Sigmoid colon (tissue), 7 donors: ENCODE measurements at regions of chr18 and their contacts with region 1.

Region 1: DNA sequence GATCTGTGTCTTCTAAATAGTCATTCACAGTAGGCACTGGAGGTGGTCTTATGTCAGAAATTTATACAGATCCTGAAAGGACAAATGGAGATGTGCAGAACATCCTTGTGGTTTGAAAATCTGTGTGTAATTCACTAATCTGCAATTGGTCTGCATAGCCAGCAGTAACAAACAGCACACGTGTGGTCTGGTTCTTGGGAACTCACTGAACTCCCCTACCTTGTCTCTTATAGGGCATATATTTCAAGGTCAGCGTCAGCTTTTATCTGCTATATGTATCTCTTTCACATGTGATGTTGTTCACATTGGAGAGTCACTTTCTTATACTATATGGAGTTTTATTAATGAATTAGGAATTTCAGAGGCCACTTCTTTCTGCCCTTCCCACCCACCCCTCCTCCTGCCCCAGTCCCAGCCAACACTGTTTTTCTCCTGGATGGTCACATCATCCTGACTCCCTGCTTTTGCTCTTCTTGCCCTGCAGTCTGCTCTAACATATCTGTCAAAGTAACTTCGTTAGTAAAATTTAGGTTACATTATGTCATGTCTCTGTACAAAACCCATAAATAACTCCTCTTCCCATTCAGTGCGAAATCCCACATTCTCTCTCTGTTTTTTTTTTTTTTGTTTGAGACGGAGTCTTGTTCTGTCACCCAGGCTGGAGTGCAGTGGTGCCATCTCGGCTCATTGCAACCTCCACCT is 35.4 kb upstream of the CABYR start:
- DNase-seq: no peak
- H3K4me3 ChIP-seq: no peak overlapping the region
- H3K27ac ChIP-seq: no peak overlapping the region
- H3K4me1 ChIP-seq: no peaks in the 10 kb centered on the region
- H3K27me3 ChIP-seq: no peaks in the 10 kb centered on the region
- CTCF ChIP-seq: no peak
- EP300 ChIP-seq: no peak
- POLR2A ChIP-seq: no peak

Region 2: DNA sequence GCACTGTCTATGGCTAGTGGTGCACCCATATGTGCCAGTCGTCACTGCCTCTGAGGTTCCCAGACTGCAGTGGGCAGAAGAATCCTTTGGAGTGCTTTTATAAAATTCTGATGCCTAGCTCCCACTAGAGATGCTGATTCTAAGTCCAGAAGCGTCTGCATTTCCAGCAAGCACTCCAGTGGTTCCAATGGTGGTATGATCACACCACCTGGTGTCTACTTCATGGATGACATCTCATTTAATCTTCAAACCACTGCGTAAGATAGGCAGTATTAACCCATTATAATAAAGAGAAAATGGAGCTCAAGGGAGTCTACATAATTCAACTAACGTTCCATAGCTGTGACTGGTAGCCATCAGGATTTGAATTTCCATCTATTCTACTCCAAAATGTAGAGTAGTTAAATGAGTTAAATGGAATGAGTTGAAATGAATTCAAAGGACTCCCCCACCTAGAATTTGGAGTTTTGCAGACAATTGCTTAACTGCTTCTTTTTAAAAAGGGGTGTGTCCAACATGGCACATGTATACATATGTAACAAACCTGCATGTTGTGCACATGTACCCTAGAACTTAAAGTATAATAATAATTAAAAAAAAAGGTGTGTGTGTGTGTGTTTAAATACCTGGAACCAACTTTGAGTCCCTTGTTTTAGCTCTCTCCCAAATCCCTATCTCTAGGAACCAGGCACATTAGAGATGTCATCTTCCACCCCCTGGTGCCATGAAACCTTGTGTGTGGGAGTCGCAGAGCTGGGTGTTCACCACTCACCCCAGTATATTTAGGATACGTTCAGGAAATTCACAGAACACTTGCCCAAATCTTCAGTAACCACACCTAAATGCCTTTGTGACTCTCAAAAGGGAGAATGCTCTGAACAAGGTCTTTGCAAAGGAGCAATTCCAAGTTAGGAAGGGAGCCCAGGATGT is 400.1 kb before region 1 on chr18:
- intact Hi-C with region 1: no loop called
- DNase-seq: no peak
- H3K4me3 ChIP-seq: no peak overlapping the region
- H3K27ac ChIP-seq: no peak overlapping the region
- H3K4me1 ChIP-seq: no peaks in the 10 kb centered on the region
- H3K27me3 ChIP-seq: no peaks in the 10 kb centered on the region
- CTCF ChIP-seq: peak in 2 of 4 experiments; percentile 17 to 28
- EP300 ChIP-seq: no peak
- POLR2A ChIP-seq: no peak

Region 3: DNA sequence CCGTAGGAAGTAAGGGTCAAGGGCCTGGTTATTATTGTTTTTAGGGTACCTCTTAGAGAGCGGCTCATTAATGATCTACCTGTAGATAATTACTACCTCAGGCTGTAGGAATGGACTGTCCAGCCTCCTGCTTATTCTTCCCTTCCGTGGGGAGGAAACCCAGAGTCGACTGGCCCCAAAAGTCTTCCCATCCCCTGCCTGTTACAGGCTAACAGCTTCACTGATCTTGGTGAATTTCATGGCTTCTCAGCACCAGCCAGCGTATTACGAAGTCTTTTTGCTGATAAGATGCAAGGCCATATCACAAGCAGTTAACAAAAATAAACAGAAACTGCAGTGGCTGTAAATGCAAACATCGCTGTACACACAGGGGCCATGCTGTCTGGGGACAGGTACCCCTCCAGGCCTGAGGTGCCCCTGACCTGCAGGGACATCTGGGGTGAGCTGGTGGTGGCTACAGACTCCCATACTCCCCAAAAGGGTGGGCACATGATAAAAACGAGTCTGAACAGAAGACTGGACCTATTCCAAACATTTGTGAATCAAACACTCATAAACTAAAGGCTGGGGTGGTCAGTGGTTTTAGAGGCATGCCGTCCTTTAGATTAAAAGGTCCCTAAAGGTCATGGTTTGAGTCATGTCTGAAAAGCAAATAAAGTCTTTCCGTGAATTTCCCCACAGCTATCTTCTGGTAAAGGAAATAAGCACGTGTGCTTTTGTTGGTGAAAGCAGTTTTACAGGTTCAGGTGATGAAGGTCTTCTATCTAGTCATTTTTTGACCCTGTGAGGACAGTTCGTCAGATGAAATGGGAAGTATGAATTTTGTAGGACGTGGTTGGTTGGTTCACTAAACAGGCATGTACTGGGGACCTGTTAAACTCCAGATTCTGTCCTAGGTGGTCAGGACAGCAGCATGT is 52.2 kb before region 1 on chr18:
- intact Hi-C with region 1: loop called (anchors 10 kb)
- DNase-seq: no peak
- H3K4me3 ChIP-seq: no peak overlapping the region
- H3K27ac ChIP-seq: no peak overlapping the region
- H3K4me1 ChIP-seq: peaks cover 0 to 6% (median 3%) of the 10 kb centered on the region in 4 donors
- H3K27me3 ChIP-seq: no peaks in the 10 kb centered on the region
- CTCF ChIP-seq: no peak
- EP300 ChIP-seq: no peak
- POLR2A ChIP-seq: no peak